Activated CD8-positive, alpha-beta T cell treated with anti-CD3 and anti-CD28 coated beads, Interleukin-2, amount 10 ng/mL, durations not matched to agents 7 days and 5 days (primary cell): ENCODE measurements at regions of chr9 and their contacts with region 1.

Region 1: DNA sequence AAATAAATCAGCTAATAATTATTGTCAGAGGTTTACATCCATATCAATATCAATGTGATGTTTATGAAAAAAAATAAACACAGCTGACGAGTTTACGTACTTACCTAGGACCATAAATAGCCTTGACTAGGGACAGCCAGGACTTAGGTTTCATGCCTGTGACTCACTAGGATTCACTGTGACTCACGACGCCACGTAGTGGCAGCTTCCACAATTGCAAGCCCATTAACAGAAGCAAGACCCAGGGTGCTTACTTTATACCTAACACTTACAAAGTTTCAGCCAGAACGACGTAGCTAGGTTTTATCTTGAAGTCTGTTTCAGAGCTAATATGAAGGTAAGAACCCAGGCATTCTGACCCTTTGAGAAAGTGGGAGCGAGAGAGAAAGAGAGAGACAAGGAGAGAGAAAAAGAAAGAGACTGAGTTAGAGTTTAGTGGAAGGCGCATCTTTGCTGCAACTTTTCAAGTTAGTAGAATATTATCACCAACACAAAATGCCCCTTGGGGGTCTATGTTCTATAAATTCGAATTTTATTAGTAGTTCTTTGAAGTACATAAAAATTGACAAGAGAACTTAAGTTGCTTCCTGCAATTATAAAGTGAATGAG is 191.2 kb downstream of the GNA14 start:
- DNase-seq: peak; percentile 88
- ATAC-seq: peak; percentile 70
- H3K4me3 Mint-ChIP-seq: no peak overlapping the region
- H3K27ac Mint-ChIP-seq: no peak overlapping the region
- H3K4me1 Mint-ChIP-seq: peaks cover 13% of the 10 kb centered on the region
- H3K27me3 Mint-ChIP-seq: peaks cover 2% of the 10 kb centered on the region

Region 2: DNA sequence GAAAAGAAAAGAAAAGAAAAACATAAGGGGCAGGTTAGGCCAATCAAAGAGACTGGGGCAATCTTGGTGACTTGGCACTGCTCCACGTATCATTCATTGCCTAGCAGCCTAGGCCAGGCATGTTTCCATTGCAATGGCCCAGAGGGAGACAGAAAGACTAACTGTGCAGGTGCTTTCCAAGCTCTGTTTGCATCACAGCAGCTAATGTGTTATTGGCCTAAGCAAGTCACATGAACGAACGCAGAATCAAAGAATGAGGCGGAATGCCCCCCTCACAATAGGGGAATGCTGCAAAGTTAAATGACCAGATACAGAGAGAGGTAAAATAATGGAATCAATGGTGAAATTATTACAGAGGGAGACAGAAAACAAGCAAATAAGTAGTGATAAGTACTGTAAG is 290.7 kb before region 1 on chr9:
- CTCF ChIA-PET with region 1: interaction called, 13 read pairs
- POLR2A ChIA-PET with region 1: no interaction called
- DNase-seq: no peak
- ATAC-seq: no peak
- H3K4me3 Mint-ChIP-seq: no peak overlapping the region
- H3K27ac Mint-ChIP-seq: no peak overlapping the region
- H3K4me1 Mint-ChIP-seq: peaks cover 2% of the 10 kb centered on the region
- H3K27me3 Mint-ChIP-seq: peaks cover 4% of the 10 kb centered on the region

Region 3: DNA sequence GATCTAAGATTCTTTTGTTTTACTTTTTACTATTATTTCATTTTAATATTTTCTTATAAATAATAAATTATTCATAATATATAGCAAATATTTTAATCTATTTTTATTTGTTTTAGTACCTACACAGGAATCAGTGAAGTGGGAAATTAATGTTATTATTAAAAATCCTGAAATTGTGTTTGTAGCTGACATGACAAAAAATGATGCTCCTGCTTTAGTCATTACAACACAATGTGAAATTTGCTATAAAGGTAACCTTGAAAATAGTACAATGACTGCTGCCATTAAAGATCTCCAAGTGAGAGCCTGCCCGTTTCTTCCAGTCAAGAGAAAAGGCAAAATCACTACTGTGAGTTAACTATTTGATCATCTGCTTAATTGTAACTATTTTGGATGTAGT is 140.9 kb before region 1 on chr9:
- CTCF ChIA-PET with region 1: no interaction called
- POLR2A ChIA-PET with region 1: no interaction called
- DNase-seq: no peak
- ATAC-seq: no peak
- H3K4me3 Mint-ChIP-seq: no peak overlapping the region
- H3K27ac Mint-ChIP-seq: no peak overlapping the region
- H3K4me1 Mint-ChIP-seq: no peaks in the 10 kb centered on the region
- H3K27me3 Mint-ChIP-seq: no peaks in the 10 kb centered on the region

Region 4: GRCh38 chr9:77440057-77440456 is 16.9 kb before region 1 on chr9:
- CTCF ChIA-PET with region 1: interaction called, 84 read pairs
- POLR2A ChIA-PET with region 1: interaction called, 3 read pairs
- DNase-seq: no peak
- ATAC-seq: no peak
- H3K4me3 Mint-ChIP-seq: no peak overlapping the region
- H3K27ac Mint-ChIP-seq: no peak overlapping the region
- H3K4me1 Mint-ChIP-seq: no peaks in the 10 kb centered on the region
- H3K27me3 Mint-ChIP-seq: peaks cover 4% of the 10 kb centered on the region

Region 5: DNA sequence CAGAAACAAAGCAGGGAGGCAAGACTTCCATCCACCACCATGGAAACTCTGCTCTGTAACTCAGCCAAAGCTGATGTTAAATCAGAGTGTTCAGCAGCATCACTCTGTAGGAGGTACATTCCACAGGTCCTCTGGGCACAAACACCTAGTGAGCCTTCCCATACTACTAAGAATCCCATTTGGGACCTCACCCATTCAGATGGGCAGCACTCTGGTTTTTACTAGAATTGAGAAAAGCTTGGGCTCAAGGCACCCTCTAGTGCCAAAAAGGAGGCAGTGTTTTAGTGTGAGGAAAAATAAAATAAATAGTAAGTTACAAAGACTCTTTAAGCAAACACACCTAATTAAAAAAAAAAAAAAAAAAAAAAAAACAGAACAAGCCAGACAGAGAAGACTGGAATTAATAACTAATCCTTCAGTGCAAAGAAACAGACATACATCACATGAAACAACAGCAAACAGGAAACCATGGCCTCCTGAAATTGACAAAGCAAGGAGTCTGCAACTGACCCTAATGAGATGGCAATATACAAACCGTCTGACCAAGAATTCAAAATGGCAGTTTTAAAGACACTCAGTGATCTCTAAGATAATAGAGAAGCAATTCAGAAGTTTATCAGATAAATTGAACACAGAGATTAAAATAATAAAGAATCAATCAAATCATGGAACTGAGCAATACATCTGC is 31.6 kb after region 1 on chr9:
- CTCF ChIA-PET with region 1: interaction called, 137 read pairs
- POLR2A ChIA-PET with region 1: interaction called, 3 read pairs
- DNase-seq: no peak
- ATAC-seq: peak; percentile 64
- H3K4me3 Mint-ChIP-seq: peak overlapping the region; percentile 72
- H3K27ac Mint-ChIP-seq: peak overlapping the region; percentile 73
- H3K4me1 Mint-ChIP-seq: peaks cover 18% of the 10 kb centered on the region
- H3K27me3 Mint-ChIP-seq: peaks cover 3% of the 10 kb centered on the region

Region 6: DNA sequence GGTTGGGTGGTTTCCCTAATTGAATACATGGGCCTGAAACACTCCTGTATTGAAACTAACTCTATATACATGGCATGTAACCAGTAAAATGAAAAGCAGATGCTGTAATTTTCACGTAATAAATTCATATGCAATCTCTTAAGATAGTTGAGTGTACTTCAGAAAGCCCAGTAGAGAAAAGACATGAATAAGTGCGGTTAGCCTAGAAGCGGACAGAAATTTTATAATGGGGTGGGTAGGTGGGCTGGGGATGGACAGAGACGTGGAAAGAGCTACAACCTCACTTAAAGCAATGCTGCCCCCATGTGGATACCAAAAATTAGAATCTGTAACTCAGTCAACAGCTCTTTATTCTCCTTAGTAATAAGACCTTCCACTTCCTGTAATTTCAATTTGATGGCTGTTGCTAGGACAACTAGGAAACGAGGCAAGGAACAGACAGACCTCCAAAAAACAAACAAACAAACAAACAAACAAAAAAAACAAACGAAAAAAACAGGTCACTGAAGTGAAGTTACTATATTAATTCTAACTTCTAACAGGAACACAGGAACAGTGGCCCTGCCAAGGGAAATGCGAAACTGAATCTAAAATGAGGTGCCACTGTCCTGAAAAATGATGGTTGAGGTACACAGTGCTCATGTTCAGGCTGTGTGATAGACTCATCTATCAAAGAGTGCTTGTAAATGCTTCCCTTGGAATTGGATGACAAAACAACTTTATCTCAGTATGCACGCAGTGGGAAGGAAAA is 294.6 kb after region 1 on chr9:
- CTCF ChIA-PET with region 1: interaction called, 34 read pairs
- POLR2A ChIA-PET with region 1: no interaction called
- DNase-seq: peak; percentile 29
- ATAC-seq: no peak
- H3K4me3 Mint-ChIP-seq: no peak overlapping the region
- H3K27ac Mint-ChIP-seq: no peak overlapping the region
- H3K4me1 Mint-ChIP-seq: peaks cover 7% of the 10 kb centered on the region
- H3K27me3 Mint-ChIP-seq: no peaks in the 10 kb centered on the region